ENCODE measurements at regions of chr12 and their contacts with region 1.

Region 1: DNA sequence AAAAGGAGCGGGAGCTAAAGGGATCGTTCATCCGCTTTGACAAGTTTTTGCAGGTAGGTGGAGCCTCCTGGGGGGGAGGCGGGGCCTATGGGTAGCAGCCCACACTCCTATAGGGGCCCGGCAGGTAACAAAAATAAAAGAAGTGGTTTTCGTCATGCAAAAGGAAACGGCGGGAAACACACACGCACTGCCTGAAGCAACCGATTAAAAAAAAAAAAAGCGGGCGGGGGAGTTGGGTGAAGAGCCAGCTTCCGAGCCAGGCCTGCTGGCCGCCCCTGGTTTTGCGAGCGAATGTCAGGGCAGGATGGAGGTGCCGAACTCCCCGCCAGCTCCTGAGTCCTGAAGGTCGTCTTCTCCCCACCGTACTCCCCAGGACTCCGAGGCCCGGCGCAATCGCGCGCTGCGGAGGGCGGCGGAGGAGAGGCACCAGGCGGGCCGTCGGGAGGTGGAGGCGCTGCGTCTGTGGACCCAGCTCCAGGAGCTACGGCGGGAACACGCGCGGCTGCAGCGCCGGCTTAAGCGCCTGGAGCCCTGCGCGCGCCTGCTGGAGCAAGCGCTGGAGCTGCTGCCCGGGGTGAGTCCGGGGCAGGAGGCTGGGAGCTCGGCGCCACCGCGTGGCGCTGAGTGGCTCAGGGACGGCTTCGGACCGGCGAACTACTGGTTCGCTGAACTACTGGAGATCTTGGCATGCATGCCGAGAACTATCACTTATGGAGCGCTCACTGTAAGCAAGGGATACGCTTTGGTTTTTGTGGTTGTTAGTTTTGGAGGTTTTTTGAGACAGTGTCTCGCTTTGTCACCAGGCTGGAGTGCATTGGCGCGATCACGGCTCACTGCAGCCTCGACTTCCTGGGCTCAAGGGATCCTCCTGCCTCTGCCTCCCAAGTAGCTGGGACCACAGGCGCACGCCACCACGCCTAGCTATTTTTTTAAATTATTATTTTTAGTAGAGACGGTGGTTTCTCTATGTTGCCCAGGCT is 3.6 kb downstream of the CFAP73 start:
- DNase-seq: no peak
- H3K4me3 ChIP-seq: peak overlapping the region; percentile 27 to 57 (median 51)
- H3K27ac ChIP-seq: no peak overlapping the region
- H3K4me1 ChIP-seq: peaks cover 18% of the 10 kb centered on the region
- H3K27me3 ChIP-seq: peaks cover 17% of the 10 kb centered on the region
- CTCF ChIP-seq: peak; percentile 22 to 70 (median 67)

Region 2: DNA sequence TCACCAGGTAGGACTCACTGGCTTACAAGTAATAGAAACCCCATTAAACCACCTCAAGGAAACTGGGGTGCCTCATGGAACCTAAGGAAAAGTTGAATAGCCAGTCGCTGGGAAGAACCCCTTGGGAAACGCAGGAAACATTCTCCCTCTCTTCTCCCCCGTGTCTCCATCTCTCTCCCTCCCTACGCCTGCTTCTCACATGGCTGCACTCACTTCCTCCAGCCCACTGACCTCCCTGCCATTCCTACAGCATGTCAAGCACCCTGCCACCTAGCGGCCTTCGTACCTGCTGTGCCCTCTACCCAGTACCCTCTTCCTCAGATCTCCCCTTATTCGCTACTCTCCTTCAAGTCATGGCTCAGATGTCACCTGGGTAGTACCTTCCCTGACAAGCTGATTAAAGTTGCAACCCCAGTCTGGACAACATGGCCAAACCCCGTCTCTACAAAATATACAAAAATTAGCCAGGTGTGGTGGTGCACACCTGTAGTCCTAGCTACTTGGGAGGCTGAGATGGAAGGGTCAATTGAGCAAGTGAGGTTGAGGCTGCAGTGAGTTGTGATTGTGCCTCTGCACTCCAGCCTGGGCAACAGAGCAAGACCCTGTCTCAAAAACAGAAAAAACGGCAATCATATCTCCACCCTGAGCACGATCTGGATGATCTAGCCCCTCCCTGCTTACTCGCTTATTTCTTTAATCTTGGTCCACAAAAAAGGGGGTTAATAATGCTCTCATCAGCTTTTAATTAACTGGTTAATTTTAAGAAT is 103.0 kb before region 1 on chr12:
- dilution Hi-C with region 1: loop called (anchors 25 kb)
- DNase-seq: no peak
- H3K4me3 ChIP-seq: no peak overlapping the region
- H3K27ac ChIP-seq: no peak overlapping the region
- H3K4me1 ChIP-seq: no peaks in the 10 kb centered on the region
- H3K27me3 ChIP-seq: peaks cover 11% of the 10 kb centered on the region
- CTCF ChIP-seq: peak; percentile 27 to 79 (median 37)